Activated CD4-positive, alpha-beta T cell treated with anti-CD3 and anti-CD28 coated beads for 36 hours (primary cell): ENCODE measurements at regions of chr12 and their contacts with region 1.

Region 1: GRCh38 chr12:47715393-47715876 is 9.6 kb upstream of the RPAP3 start:
- DNase-seq: peak; percentile 91
- ATAC-seq: peak; percentile 86
- H3K4me3 Mint-ChIP-seq: no peak overlapping the region
- H3K27ac Mint-ChIP-seq: no peak overlapping the region
- H3K4me1 Mint-ChIP-seq: peaks cover 18% of the 10 kb centered on the region
- H3K27me3 Mint-ChIP-seq: no peaks in the 10 kb centered on the region

Region 2: GRCh38 chr12:46499901-46500300 is 1215.5 kb before region 1 on chr12:
- CTCF ChIA-PET with region 1: no interaction called
- POLR2A ChIA-PET with region 1: no interaction called
- intact Hi-C with region 1: no loop called
- DNase-seq: no peak
- ATAC-seq: no peak
- H3K4me3 Mint-ChIP-seq: no peak overlapping the region
- H3K27ac Mint-ChIP-seq: no peak overlapping the region
- H3K4me1 Mint-ChIP-seq: no peaks in the 10 kb centered on the region
- H3K27me3 Mint-ChIP-seq: no peaks in the 10 kb centered on the region

Region 3: GRCh38 chr12:47591361-47591791 is 124.1 kb before region 1 on chr12:
- CTCF ChIA-PET with region 1: no interaction called
- POLR2A ChIA-PET with region 1: no interaction called
- intact Hi-C with region 1: no loop called
- DNase-seq: no peak
- ATAC-seq: no peak
- H3K4me3 Mint-ChIP-seq: no peak overlapping the region
- H3K27ac Mint-ChIP-seq: no peak overlapping the region
- H3K4me1 Mint-ChIP-seq: peaks cover 3% of the 10 kb centered on the region
- H3K27me3 Mint-ChIP-seq: no peaks in the 10 kb centered on the region

Region 4: GRCh38 chr12:47725893-47726292 is 10.5 kb after region 1 on chr12:
- CTCF ChIA-PET with region 1: interaction called, 34 read pairs
- POLR2A ChIA-PET with region 1: no interaction called
- intact Hi-C with region 1: no loop called
- DNase-seq: peak; percentile 28
- ATAC-seq: peak; percentile 79
- H3K4me3 Mint-ChIP-seq: no peak overlapping the region
- H3K27ac Mint-ChIP-seq: no peak overlapping the region
- H3K4me1 Mint-ChIP-seq: peaks cover 18% of the 10 kb centered on the region
- H3K27me3 Mint-ChIP-seq: no peaks in the 10 kb centered on the region

Region 5: GRCh38 chr12:47758834-47759690 is 43.6 kb after region 1 on chr12 and contains the start of gene RAPGEF3:
- CTCF ChIA-PET with region 1: interaction called, 10 read pairs
- POLR2A ChIA-PET with region 1: no interaction called
- intact Hi-C with region 1: no loop called
- DNase-seq: peak; percentile 84
- ATAC-seq: peak; percentile 74
- H3K4me3 Mint-ChIP-seq: peak within 1 kb of the TSS; percentile 63
- H3K27ac Mint-ChIP-seq: no peak within 1 kb of the TSS
- H3K4me1 Mint-ChIP-seq: peaks cover 47% of the 10 kb centered on the region
- H3K27me3 Mint-ChIP-seq: no peaks in the 10 kb centered on the region
- total RNA-seq, gene RAPGEF3: 0.43 to 0.83 TPM

Region 6: GRCh38 chr12:47779301-47779942 is 64.0 kb after region 1 on chr12:
- CTCF ChIA-PET with region 1: interaction called, 341 read pairs
- POLR2A ChIA-PET with region 1: no interaction called
- intact Hi-C with region 1: loop called (anchors 1 kb)
- DNase-seq: peak; percentile 96
- ATAC-seq: peak; percentile 82
- H3K4me3 Mint-ChIP-seq: no peak overlapping the region
- H3K27ac Mint-ChIP-seq: peak overlapping the region; percentile 37
- H3K4me1 Mint-ChIP-seq: peaks cover 29% of the 10 kb centered on the region
- H3K27me3 Mint-ChIP-seq: no peaks in the 10 kb centered on the region

Region 7: DNA sequence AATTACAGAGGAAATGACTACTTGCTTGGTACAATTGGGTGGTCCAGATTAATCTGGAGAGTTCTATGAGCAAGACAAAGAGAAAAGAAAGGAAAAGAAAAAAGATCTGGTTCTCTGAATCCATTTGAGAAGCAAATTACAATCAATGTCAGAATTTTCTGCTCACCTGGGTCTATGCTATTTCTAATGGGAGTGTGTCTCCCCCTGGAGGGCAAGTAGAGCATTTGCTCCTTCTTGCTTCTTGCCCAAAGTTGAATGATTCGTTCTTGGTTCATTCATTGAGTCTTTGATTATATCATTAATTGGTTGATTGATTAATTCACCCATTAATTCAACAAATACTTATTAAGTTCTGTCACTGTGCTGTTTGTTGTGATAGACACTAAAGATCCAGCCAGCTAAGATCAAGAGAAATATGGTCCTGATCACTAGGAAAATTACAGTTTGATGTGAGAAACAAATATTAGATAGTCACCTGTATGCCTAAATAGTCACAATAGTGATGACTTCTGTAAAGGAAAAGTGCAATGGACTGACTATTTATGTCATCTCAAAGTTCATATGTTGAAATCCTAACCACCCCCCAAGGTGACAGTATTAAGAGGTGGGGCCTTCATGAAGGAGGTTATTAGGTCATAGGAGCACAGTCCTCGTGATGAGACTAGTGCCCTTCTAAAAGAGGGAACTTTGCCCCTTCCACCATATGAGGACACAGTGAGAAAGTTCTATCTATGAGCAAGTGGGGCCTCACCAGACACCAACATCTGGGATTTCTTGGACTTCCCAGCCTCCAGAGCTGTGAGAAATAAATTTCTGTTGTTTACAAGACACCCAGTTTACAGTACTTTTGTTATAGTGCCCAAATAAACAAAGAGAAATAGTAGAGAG is 449.9 kb after region 1 on chr12:
- CTCF ChIA-PET with region 1: no interaction called
- POLR2A ChIA-PET with region 1: no interaction called
- intact Hi-C with region 1: loop called in 1 of 2 experiments (anchors 1 kb)
- DNase-seq: peak; percentile 62
- ATAC-seq: peak; percentile 84
- H3K4me3 Mint-ChIP-seq: no peak overlapping the region
- H3K27ac Mint-ChIP-seq: no peak overlapping the region
- H3K4me1 Mint-ChIP-seq: peaks cover 7% of the 10 kb centered on the region
- H3K27me3 Mint-ChIP-seq: no peaks in the 10 kb centered on the region

Region 8: DNA sequence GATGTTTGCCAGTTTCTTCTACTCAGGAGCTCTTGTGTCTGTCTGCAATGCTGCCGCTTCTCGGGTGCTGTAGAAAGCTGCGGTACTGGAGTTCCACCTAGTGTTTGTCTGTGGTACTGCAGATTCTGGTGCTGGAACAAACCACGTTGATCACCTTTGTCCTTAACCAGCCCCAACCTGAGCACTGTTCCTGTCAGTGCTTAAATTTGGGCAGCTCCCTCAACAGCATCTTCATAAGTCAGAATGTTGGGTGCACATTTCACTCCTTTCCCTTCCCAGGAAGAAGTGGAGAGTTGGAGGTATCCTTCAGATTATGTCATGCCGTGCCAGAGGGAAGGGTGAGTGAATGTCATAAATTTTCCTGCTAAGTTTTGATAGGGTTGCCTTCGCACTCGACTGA is 903.1 kb after region 1 on chr12:
- CTCF ChIA-PET with region 1: no interaction called
- POLR2A ChIA-PET with region 1: no interaction called
- intact Hi-C with region 1: loop called in 1 of 2 experiments (anchors 5 kb)
- DNase-seq: peak; percentile 85
- ATAC-seq: peak; percentile 89
- H3K4me3 Mint-ChIP-seq: no peak overlapping the region
- H3K27ac Mint-ChIP-seq: no peak overlapping the region
- H3K4me1 Mint-ChIP-seq: no peaks in the 10 kb centered on the region
- H3K27me3 Mint-ChIP-seq: peaks cover 30% of the 10 kb centered on the region